Dorsolateral prefrontal cortex (tissue), 120 donors: ENCODE measurements at regions of chr1 and their contacts with region 1.

Region 1: DNA sequence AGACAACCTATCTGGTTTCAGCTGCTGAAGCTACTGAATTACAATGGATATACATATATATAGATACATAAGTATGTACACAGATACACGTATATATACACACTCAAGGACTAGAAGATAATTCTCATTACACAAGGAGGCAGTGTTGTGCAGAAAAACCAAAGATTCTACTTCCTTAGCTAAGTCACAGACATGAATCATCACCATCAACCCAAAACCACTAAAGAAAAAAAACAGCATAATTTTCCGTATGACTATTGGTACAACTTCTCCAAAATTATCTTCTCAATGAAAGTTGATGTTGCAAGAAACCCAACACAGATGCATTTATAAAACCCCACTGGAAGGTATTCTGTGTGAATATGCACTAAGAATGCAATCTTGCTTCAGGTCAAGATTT is 36.8 kb upstream of the RPF1 start:
- DNase-seq: no peak
- H3K4me3 ChIP-seq: no peak overlapping the region
- H3K27ac ChIP-seq: no peak overlapping the region
- H3K27me3 ChIP-seq: no peaks in the 10 kb centered on the region
- CTCF ChIP-seq: peak; percentile 26 to 74 (median 56)

Region 2: GRCh38 chr1:83734420-83734819 is 707.8 kb before region 1 on chr1:
- intact Hi-C with region 1: no loop called
- DNase-seq: peak in 3 of 10 donors; percentile 41 to 46 (median 45)
- H3K4me3 ChIP-seq: no peak overlapping the region
- H3K27ac ChIP-seq: no peak overlapping the region
- H3K27me3 ChIP-seq: no peaks in the 10 kb centered on the region
- CTCF ChIP-seq: no peak

Region 3: DNA sequence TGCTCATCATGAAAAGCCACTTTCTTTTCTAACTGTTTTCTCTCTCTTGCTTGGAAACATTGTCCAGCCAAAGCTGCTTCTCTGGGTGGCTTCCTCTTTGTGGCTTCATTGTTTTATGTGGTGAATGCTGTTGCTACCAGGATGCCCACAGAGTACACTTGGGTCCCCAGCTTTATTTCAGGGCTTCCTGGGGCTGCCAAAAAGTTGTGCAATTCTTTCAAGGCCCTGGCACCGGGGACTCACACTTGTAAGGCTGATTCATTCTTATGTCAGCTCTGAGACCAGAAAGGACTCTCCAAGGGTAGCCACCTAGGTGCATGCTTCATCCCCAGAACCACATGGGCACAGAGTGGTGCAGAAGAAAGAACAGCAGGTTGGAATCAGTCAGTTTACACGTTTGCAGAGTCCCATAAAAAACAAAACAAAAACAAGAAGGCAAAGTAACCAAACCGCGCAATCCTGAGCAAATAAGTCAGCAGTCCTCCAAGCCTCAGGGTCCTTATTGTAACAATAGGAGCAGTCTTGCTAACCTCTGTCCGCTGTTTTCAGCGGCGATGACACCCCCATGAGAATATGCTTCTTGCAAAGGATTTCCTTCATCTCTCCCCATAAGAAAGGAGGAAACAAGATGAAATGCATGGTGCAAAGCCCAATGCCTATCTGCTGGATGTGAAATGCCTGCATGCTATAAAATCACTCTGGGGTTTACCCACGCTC is 337.9 kb after region 1 on chr1:
- intact Hi-C with region 1: loop called in 1 of 2 experiments (anchors 5 kb)
- DNase-seq: no peak
- H3K4me3 ChIP-seq: no peak overlapping the region
- H3K27ac ChIP-seq: peak overlapping the region in 7 of 59 donors; percentile 8 to 55 (median 37)
- H3K27me3 ChIP-seq: no peaks in the 10 kb centered on the region
- CTCF ChIP-seq: no peak

Region 4: GRCh38 chr1:85374160-85374559 is 931.9 kb after region 1 on chr1:
- intact Hi-C with region 1: no loop called
- DNase-seq: no peak
- H3K4me3 ChIP-seq: no peak overlapping the region
- H3K27ac ChIP-seq: peak overlapping the region in 7 of 59 donors; percentile 2 to 47 (median 18)
- H3K27me3 ChIP-seq: no peaks in the 10 kb centered on the region
- CTCF ChIP-seq: no peak